Dendritic cell treated with granulocyte-macrophage colony-stimulating factor and Interleukin-4, amounts not matched to agents 40 ng/mL and 50 ng/mL, for 4 days (primary cell): ENCODE measurements at regions of chr21 and their contacts with region 1.

Region 1: GRCh38 chr21:38805328-38806152 is at the start of gene ETS2:
- H3K4me3 Mint-ChIP-seq: peak within 1 kb of the TSS; percentile 90
- H3K27ac Mint-ChIP-seq: peak within 1 kb of the TSS; percentile 97
- H3K4me1 Mint-ChIP-seq: peaks cover 35% of the 10 kb centered on the region
- H3K27me3 Mint-ChIP-seq: peaks cover 27% of the 10 kb centered on the region

Region 2: GRCh38 chr21:38733973-38734546 is 71.5 kb before region 1 on chr21:
- intact Hi-C with region 1: loop called (anchors 1 kb)
- H3K4me3 Mint-ChIP-seq: peak overlapping the region; percentile 79
- H3K27ac Mint-ChIP-seq: peak overlapping the region; percentile 90
- H3K4me1 Mint-ChIP-seq: peaks cover 34% of the 10 kb centered on the region
- H3K27me3 Mint-ChIP-seq: peaks cover 24% of the 10 kb centered on the region

Region 3: DNA sequence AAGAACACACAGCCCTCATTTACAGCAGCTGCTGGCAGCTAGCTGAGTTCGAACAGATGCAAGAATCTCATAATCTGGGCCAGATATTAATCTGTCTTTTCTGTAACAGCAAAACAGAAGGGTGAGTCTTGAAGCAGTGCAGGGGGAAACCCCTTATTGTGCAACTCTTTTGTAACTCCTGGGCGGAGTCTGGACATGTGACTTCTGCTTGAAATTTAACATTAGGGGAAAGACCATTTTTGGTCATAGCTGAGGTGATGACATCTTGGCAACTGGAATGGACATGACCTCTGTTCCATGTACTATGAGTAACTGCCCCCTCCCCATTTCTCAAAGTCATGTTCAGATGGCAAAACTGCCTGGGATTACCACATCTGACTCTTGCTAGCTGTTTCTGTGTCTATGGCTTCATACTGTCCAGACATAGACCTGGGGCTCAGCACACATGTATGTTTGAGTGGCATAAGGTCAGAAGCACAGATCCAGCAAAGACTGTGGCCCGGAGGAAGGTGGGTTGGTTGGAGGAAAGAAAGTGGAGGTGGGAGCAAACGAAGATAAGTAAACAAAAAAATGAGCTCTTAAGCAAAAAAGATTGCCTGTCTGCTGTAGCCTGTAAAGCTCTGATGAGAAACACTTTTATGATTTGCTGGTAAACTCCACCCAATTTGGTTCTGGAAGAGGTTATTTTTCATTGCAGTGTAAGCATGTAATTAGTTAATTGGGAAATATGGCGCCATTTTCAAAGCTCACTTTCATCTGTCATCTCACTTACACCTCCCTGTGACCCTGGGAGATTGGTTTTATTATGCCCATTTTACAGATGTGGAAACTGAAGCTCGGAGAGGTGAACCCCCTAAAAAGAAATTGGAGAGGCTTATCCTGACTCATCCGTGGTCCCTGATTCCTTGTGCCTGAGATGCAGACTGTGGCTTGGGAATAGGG is 26.3 kb after region 1 on chr21:
- intact Hi-C with region 1: loop called (anchors 1 kb)
- H3K4me3 Mint-ChIP-seq: no peak overlapping the region
- H3K27ac Mint-ChIP-seq: peak overlapping the region; percentile 75
- H3K4me1 Mint-ChIP-seq: peaks cover 31% of the 10 kb centered on the region
- H3K27me3 Mint-ChIP-seq: peaks cover 13% of the 10 kb centered on the region

Region 4: GRCh38 chr21:38875694-38876492 is 70.4 kb after region 1 on chr21:
- intact Hi-C with region 1: no loop called
- H3K4me3 Mint-ChIP-seq: no peak overlapping the region
- H3K27ac Mint-ChIP-seq: no peak overlapping the region
- H3K4me1 Mint-ChIP-seq: peaks cover 27% of the 10 kb centered on the region
- H3K27me3 Mint-ChIP-seq: no peaks in the 10 kb centered on the region

Region 5: DNA sequence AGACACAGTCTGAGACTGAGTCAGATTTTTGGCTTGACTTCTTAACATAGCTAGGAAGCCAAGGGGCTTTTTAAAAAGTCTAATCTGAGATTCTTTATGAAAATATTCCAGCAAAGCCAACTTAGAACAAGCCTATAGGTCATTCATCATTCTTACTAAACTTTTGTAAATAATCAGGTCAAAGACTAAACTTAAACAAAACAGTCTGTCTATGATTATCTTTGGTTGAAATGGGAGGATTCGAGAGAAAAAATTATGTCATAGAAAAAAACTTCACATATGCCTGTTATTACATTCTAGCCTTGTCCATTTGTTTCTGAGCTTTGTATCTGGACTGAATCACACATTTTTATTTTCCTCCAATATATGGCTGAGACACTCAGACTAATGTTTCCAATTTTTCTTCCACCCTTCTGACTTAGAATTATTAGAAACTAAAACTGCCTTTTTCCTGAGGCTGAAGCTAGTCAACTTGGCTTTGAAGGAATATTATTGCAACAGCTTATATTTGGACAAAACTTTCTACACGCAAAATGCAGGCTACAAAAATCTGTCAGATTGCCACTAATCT is 83.5 kb after region 1 on chr21:
- intact Hi-C with region 1: no loop called
- H3K4me3 Mint-ChIP-seq: no peak overlapping the region
- H3K27ac Mint-ChIP-seq: no peak overlapping the region
- H3K4me1 Mint-ChIP-seq: no peaks in the 10 kb centered on the region
- H3K27me3 Mint-ChIP-seq: peaks cover 5% of the 10 kb centered on the region

Region 6: GRCh38 chr21:39094847-39095579 is 289.5 kb after region 1 on chr21:
- intact Hi-C with region 1: loop called (anchors 5 kb)
- H3K4me3 Mint-ChIP-seq: peak overlapping the region; percentile 39
- H3K27ac Mint-ChIP-seq: peak overlapping the region; percentile 94
- H3K4me1 Mint-ChIP-seq: peaks cover 89% of the 10 kb centered on the region
- H3K27me3 Mint-ChIP-seq: peaks cover 5% of the 10 kb centered on the region

Region 7: DNA sequence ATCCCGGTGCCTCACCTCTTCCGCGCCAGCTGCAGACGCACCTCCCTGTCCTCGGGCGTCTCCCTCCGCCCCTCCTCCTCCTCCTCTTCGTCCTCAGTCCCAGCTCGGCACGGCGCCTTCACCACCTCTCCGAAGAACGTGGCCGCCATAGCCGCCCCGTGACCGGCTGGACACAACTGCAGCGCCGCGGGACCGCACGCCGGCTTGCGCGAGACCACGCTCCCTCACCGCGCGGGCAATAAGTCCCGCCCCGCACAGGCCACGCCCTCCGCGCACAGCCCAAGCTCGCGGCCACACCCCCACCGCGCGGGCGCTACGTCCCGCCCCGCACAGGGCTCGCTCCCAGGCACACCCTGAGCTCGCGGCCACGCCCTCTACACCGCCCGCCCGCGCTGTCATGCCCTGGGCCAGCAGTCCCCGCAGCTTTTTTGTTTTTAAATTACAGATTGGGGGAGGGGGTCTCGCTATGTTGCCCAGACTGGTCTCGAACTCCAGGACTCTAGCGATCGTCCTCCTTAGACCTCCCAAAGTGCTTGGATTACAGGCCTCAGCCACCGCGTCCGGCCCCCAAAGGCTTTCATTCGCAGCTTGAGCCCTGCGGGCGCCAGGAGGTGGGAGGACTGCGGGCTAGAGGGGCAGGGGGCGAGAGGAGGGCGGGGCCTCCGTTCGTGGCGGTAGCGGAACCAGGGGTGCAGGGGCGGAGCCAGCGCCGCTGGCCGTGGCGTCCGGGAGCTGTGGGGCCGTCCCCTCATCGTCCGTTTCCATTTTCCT is 377.9 kb after region 1 on chr21 and contains the start of gene PSMG1:
- intact Hi-C with region 1: loop called (anchors 5 kb)
- H3K4me3 Mint-ChIP-seq: peak within 1 kb of the TSS; percentile 92
- H3K27ac Mint-ChIP-seq: peak within 1 kb of the TSS; percentile 96
- H3K4me1 Mint-ChIP-seq: peaks cover 31% of the 10 kb centered on the region
- H3K27me3 Mint-ChIP-seq: no peaks in the 10 kb centered on the region

Region 8: GRCh38 chr21:39232861-39233291 is 427.3 kb after region 1 on chr21:
- intact Hi-C with region 1: no loop called
- H3K4me3 Mint-ChIP-seq: no peak overlapping the region
- H3K27ac Mint-ChIP-seq: no peak overlapping the region
- H3K4me1 Mint-ChIP-seq: no peaks in the 10 kb centered on the region
- H3K27me3 Mint-ChIP-seq: no peaks in the 10 kb centered on the region